HepG2 (cell line): ENCODE measurements at regions of chr9 and their contacts with region 1.

Region 1: GRCh38 chr9:133715866-133716563 is 22.1 kb downstream of the SARDH start:
- DNase-seq: peak; percentile 60
- ATAC-seq: peak; percentile 50
- H3K4me3 ChIP-seq: peak overlapping the region; percentile 12 to 72 (median 53); a peak in 5 of 6 replicates
- H3K27ac ChIP-seq: peak overlapping the region; percentile 90
- H3K4me1 ChIP-seq: peaks cover 63% of the 10 kb centered on the region
- H3K27me3 ChIP-seq: no peaks in the 10 kb centered on the region
- CTCF ChIP-seq: peak; percentile 84
- EP300 ChIP-seq: peak; percentile 11 to 23; a peak in 1 of 4 replicates
- POLR2A ChIP-seq: peak in 1 of 2 experiments; percentile 37; a peak in 1 of 4 replicates
- RAD21 ChIP-seq: peak; percentile 45

Region 2: GRCh38 chr9:133459476-133460404 is 256.3 kb before region 1 on chr9 and contains the start of gene CACFD1:
- CTCF ChIA-PET with region 1: no interaction called
- POLR2A ChIA-PET with region 1: interaction called, 10 read pairs
- in situ Hi-C with region 1: no loop called
- intact Hi-C with region 1: no loop called
- DNase-seq: peak; percentile 93
- ATAC-seq: peak; percentile 75
- H3K4me3 ChIP-seq: peak within 1 kb of the TSS; percentile 89 to 94 (median 89)
- H3K27ac ChIP-seq: peak within 1 kb of the TSS; percentile 99
- H3K4me1 ChIP-seq: peaks cover 52% of the 10 kb centered on the region
- H3K27me3 ChIP-seq: no peaks in the 10 kb centered on the region; a peak in 1 of 5 replicates
- CTCF ChIP-seq: no peak
- EP300 ChIP-seq: no peak
- POLR2A ChIP-seq: peak in 1 of 2 experiments; percentile 60; a peak in 1 of 4 replicates
- RAD21 ChIP-seq: peak; percentile 56; the same call in 1 of the 2 replicates
- total RNA-seq, gene CACFD1: 8.2 and 13.8 TPM in 2 replicates

Region 3: GRCh38 chr9:133532937-133533668 is 182.9 kb before region 1 on chr9:
- CTCF ChIA-PET with region 1: interaction called, 6 read pairs
- POLR2A ChIA-PET with region 1: interaction called, 19 read pairs
- in situ Hi-C with region 1: no loop called
- intact Hi-C with region 1: loop called (anchors 2 kb)
- DNase-seq: peak; percentile 75
- ATAC-seq: peak; percentile 69
- H3K4me3 ChIP-seq: peak overlapping the region in 1 of 3 experiments; percentile 72; a peak in 2 of 6 replicates
- H3K27ac ChIP-seq: no peak overlapping the region
- H3K4me1 ChIP-seq: peaks cover 38% of the 10 kb centered on the region
- H3K27me3 ChIP-seq: peaks cover 17 to 42% of the 10 kb centered on the region in 2 experiments; a peak in 4 of 5 replicates
- CTCF ChIP-seq: peak; percentile 95
- EP300 ChIP-seq: no peak
- POLR2A ChIP-seq: no peak
- RAD21 ChIP-seq: peak; percentile 78

Region 4: GRCh38 chr9:133658442-133659431 is 57.3 kb before region 1 on chr9:
- CTCF ChIA-PET with region 1: no interaction called
- POLR2A ChIA-PET with region 1: interaction called, 5 read pairs
- in situ Hi-C with region 1: no loop called
- intact Hi-C with region 1: loop called (anchors 2 kb)
- DNase-seq: peak; percentile 81
- ATAC-seq: peak; percentile 91
- H3K4me3 ChIP-seq: peak overlapping the region; percentile 16 to 49 (median 16); a peak in 3 of 6 replicates
- H3K27ac ChIP-seq: peak overlapping the region; percentile 11
- H3K4me1 ChIP-seq: peaks cover 37% of the 10 kb centered on the region
- H3K27me3 ChIP-seq: 0 out of 5 replicates have a peak, but pooled peaks cover 1 to 5% of the 10 kb centered on the region in 2 experiments
- CTCF ChIP-seq: peak; percentile 32
- EP300 ChIP-seq: no peak
- POLR2A ChIP-seq: peak in 1 of 2 experiments; percentile 62; a peak in 2 of 4 replicates
- RAD21 ChIP-seq: peak; percentile 9; the same call in 1 of the 2 replicates

Region 5: GRCh38 chr9:133726401-133727276 is 10.6 kb after region 1 on chr9:
- CTCF ChIA-PET with region 1: interaction called, 5 read pairs
- POLR2A ChIA-PET with region 1: interaction called, 12 read pairs
- in situ Hi-C with region 1: no loop called
- intact Hi-C with region 1: no loop called
- DNase-seq: peak; percentile 60
- ATAC-seq: peak; percentile 86
- H3K4me3 ChIP-seq: no peak overlapping the region
- H3K27ac ChIP-seq: no peak overlapping the region
- H3K4me1 ChIP-seq: peaks cover 13% of the 10 kb centered on the region
- H3K27me3 ChIP-seq: no peaks in the 10 kb centered on the region
- CTCF ChIP-seq: peak; percentile 83
- EP300 ChIP-seq: no peak
- POLR2A ChIP-seq: no peak
- RAD21 ChIP-seq: peak; percentile 77

Region 6: GRCh38 chr9:133742849-133743444 is 26.9 kb after region 1 on chr9:
- CTCF ChIA-PET with region 1: interaction called, 3 read pairs
- POLR2A ChIA-PET with region 1: interaction called, 156 read pairs
- in situ Hi-C with region 1: no loop called
- intact Hi-C with region 1: no loop called
- DNase-seq: peak; percentile 83
- ATAC-seq: peak; percentile 52
- H3K4me3 ChIP-seq: no peak overlapping the region
- H3K27ac ChIP-seq: peak overlapping the region; percentile 17
- H3K4me1 ChIP-seq: peaks cover 85% of the 10 kb centered on the region
- H3K27me3 ChIP-seq: no peaks in the 10 kb centered on the region
- CTCF ChIP-seq: peak; percentile 98
- EP300 ChIP-seq: no peak
- POLR2A ChIP-seq: no peak
- RAD21 ChIP-seq: peak; percentile 89

Region 7: GRCh38 chr9:133768859-133769425 is 52.9 kb after region 1 on chr9:
- CTCF ChIA-PET with region 1: no interaction called
- POLR2A ChIA-PET with region 1: interaction called, 12 read pairs
- in situ Hi-C with region 1: no loop called
- intact Hi-C with region 1: no loop called
- DNase-seq: peak; percentile 83
- ATAC-seq: peak; percentile 84
- H3K4me3 ChIP-seq: no peak overlapping the region
- H3K27ac ChIP-seq: peak overlapping the region; percentile 36
- H3K4me1 ChIP-seq: peaks cover 17% of the 10 kb centered on the region
- H3K27me3 ChIP-seq: no peaks in the 10 kb centered on the region
- CTCF ChIP-seq: peak; percentile 99
- EP300 ChIP-seq: peak in 1 of 2 experiments; percentile 65; a peak in 2 of 4 replicates
- POLR2A ChIP-seq: no peak
- RAD21 ChIP-seq: peak; percentile 95